Panc1 (cell line): ENCODE measurements at regions of chr3 and their contacts with region 1.

Region 1: DNA sequence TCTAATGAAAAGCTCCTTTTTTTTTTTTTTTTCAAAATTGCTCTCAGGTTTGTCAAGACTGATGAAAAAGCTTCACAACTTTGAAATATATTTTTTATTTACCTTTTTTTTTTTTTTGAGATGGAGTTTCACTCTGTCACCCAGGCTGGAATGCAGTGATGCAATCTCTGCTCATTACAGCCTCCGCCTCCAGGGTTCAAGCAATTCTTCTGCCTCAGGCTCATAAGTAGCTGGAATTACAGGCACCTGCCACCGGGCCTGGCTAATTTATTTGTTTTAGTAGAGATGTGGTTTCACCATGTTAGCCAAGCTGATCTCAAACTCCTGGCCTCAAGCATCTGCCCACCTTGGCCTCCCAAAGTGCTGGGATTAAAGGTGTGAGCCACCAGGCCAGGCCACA is 1515.0 kb downstream of the OTOL1 start:
- DNase-seq: no peak
- ATAC-seq: no peak
- H3K4me3 ChIP-seq: no peak overlapping the region
- H3K27ac ChIP-seq: no peak overlapping the region
- H3K4me1 ChIP-seq: no peaks in the 10 kb centered on the region
- H3K27me3 ChIP-seq: no peaks in the 10 kb centered on the region
- CTCF ChIP-seq: no peak

Region 2: GRCh38 chr3:162719684-162720341 is 291.8 kb before region 1 on chr3:
- CTCF ChIA-PET with region 1: no interaction called
- POLR2A ChIA-PET with region 1: no interaction called
- in situ Hi-C with region 1: no loop called
- intact Hi-C with region 1: no loop called
- DNase-seq: peak; percentile 68
- ATAC-seq: peak; percentile 79
- H3K4me3 ChIP-seq: no peak overlapping the region
- H3K27ac ChIP-seq: no peak overlapping the region
- H3K4me1 ChIP-seq: no peaks in the 10 kb centered on the region
- H3K27me3 ChIP-seq: no peaks in the 10 kb centered on the region
- CTCF ChIP-seq: no peak

Region 3: DNA sequence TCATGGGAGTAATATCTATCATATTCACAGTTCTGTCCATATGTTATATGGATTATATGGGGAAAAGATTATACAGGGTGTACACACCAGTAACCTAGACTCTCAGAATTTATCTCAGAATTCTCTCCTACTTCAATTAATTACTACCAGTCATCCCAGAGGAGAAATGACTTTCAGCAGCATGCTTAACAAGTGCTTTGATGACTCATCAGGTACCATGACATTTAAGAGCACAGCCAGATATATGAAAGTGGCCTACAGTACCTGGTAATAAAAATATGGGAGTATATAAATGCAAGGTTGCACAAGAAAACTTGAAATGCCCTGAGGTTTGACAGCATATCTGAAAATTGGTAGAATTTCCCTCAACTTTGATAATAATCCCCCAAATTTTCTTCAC is 242.0 kb before region 1 on chr3:
- CTCF ChIA-PET with region 1: no interaction called
- POLR2A ChIA-PET with region 1: no interaction called
- in situ Hi-C with region 1: no loop called
- intact Hi-C with region 1: loop called (anchors 10 kb)
- DNase-seq: no peak
- ATAC-seq: no peak
- H3K4me3 ChIP-seq: no peak overlapping the region
- H3K27ac ChIP-seq: no peak overlapping the region
- H3K4me1 ChIP-seq: no peaks in the 10 kb centered on the region
- H3K27me3 ChIP-seq: no peaks in the 10 kb centered on the region
- CTCF ChIP-seq: no peak

Region 4: GRCh38 chr3:162897286-162897685 is 114.3 kb before region 1 on chr3:
- CTCF ChIA-PET with region 1: no interaction called
- POLR2A ChIA-PET with region 1: no interaction called
- in situ Hi-C with region 1: no loop called
- intact Hi-C with region 1: no loop called
- DNase-seq: no peak
- ATAC-seq: no peak
- H3K4me3 ChIP-seq: no peak overlapping the region
- H3K27ac ChIP-seq: no peak overlapping the region
- H3K4me1 ChIP-seq: no peaks in the 10 kb centered on the region
- H3K27me3 ChIP-seq: no peaks in the 10 kb centered on the region
- CTCF ChIP-seq: no peak

Region 5: GRCh38 chr3:163273690-163274089 is 262.1 kb after region 1 on chr3:
- CTCF ChIA-PET with region 1: no interaction called
- POLR2A ChIA-PET with region 1: no interaction called
- in situ Hi-C with region 1: no loop called
- intact Hi-C with region 1: no loop called
- DNase-seq: no peak
- ATAC-seq: no peak
- H3K4me3 ChIP-seq: no peak overlapping the region
- H3K27ac ChIP-seq: no peak overlapping the region
- H3K4me1 ChIP-seq: no peaks in the 10 kb centered on the region
- H3K27me3 ChIP-seq: no peaks in the 10 kb centered on the region
- CTCF ChIP-seq: no peak; the same call in 1 of the 2 replicates